ENCODE measurements at regions of chr1 and their contacts with region 1.

Region 1: GRCh38 chr1:204503122-204503912 is 8.7 kb upstream of the PIK3C2B start:
- DNase-seq: no peak

Region 2: DNA sequence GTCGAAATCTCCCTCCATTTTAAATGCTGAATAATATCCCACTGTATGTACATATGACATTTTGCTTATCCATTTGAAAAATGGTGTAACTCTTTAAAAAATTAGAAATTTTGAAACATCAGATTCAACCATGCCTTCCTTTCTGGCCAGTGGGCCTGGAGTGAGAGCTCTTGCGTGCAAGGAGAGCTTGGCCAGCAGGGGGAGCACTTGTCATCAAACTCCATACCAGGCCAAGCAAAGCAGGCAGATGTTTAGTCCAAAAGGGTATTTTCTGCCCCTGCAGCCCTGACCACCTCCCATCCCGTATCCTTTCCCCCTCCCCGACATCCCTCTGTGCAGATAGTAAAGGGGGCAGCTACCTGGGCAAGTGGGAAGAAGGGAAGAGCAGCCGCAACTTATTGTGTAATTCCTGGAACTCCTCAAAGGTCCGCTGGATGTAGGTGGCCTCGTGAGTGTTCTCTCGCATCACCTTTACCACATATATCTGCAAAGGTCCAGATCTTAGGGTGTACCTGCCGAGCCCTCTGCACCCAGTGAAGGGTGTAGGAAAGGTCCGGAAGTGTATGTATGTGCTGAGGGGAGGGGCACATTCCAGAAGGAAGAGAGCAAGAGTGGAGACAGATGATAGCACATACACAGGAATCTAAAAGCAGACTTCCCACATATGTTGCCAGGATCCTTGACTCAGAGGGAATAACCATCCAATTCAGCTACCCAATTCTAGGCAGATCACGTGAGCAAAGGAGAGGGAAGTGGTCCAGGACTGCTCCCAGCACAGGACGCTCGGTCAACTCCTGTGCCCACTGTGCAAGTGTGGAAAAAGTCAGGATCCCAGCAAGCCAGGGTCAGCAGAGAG is 71.8 kb before region 1 on chr1:
- intact Hi-C with region 1: loop called (anchors 5 kb)
- DNase-seq: peak; percentile 87

Region 3: DNA sequence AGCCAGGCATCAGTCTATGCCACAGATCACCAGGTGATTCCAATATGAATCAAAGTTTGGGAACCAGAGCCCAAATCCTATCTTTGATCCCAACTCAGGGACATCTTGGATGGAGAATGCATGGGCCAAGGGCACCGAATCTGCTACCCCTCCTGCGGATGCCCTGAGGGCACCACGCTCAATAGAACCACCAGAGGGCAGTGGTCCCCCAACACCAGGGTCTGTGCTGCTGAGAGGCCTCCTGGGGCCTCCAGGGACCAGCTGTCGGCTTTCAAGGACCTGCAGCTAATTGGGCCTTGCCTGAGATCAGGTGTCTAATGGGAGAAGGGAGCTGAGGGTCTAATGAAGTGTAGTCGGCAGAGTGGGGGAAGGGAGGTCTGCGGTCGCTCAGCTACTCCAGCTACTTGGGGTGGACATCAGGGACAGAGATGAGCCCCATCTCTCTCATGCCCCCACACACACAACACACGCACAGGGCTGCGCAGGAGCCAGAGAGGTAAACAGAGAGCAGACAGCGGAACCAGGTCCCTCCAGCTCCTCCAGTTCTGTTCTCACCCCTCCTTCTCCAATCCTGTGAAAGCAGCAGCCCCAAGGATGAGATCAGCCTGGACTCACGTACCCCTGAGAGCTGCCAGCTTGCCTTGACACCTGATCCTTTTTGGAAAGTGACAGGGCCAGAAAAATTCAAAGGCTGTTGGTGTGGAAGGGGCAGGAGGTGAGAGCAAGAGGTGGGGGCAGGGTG is 56.8 kb before region 1 on chr1:
- intact Hi-C with region 1: loop called (anchors 1 kb)
- DNase-seq: peak; percentile 85